Natural killer cell (primary cell): ENCODE measurements at regions of chr9 and their contacts with region 1.

Region 1: DNA sequence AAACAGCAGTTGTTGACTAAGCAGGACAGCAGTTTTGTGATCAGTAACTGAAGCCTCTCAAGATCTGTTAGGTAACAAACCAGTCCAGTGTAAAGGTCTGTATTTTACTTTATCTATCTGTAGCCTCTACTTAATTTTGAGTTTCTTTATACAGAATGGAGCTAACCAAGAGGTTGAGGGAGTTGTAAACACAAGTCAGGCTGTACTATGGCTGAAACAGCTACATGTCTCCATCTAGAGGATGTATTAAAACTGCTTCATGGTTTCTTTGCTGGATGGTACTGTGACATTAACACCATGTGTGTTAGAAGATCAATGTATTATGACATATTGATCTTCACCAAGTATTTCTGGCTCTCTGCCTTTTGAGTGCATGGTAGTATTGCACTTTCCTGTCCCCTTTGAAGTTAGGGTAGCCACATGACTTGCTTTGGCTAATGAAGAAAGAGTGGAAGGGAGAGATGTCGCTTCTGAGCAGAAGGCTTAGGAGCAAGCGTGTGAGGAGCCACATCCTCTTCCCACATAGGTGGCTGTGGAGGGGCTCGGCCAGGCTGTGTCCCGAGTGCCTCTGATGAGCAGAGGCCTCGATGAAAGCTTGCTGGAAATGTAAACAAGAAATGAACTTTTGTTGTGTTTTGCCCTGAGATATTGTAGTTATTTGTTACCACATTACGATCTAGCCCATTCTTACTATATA is 105.6 kb upstream of the PCA3 start:
- DNase-seq: peak in 1 of 2 donors; percentile 69
- ATAC-seq: peak; percentile 70 to 82 (median 75)
- H3K4me3 ChIP-seq: no peak overlapping the region
- H3K4me3 Mint-ChIP-seq: no peak overlapping the region
- H3K27ac ChIP-seq: no peak overlapping the region
- H3K27ac Mint-ChIP-seq: peak overlapping the region; percentile 5 to 85
- H3K4me1 ChIP-seq: peaks cover 9% of the 10 kb centered on the region
- H3K4me1 Mint-ChIP-seq: peaks cover 56 to 63% of the 10 kb centered on the region in 2 donors
- H3K27me3 ChIP-seq: no peaks in the 10 kb centered on the region
- H3K27me3 Mint-ChIP-seq: no peaks in the 10 kb centered on the region
- CTCF ChIP-seq: peak; percentile 70

Region 2: DNA sequence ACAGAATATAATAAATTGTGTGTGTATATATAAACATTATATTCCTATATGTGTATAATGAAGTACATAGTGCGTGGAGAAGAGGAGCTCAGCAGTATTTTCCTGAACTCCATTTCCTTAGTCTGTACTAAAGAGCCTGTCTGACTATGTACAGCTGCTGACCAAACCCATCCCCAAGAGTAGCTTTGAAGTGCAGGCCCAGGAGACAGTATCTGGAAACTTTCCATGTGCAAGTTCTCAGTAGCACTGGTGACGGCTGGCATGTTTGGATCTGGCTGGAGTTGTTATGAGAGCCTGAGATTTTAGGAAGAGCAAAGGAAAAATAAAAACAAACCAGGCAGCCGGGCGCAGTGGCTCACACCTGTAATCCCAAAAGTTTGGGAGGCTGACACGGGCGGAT is 508.7 kb before region 1 on chr9:
- intact Hi-C with region 1: no loop called
- DNase-seq: no peak
- ATAC-seq: no peak
- H3K4me3 ChIP-seq: no peak overlapping the region
- H3K4me3 Mint-ChIP-seq: no peak overlapping the region
- H3K27ac ChIP-seq: no peak overlapping the region
- H3K27ac Mint-ChIP-seq: no peak overlapping the region
- H3K4me1 ChIP-seq: no peaks in the 10 kb centered on the region
- H3K4me1 Mint-ChIP-seq: no peaks in the 10 kb centered on the region
- H3K27me3 ChIP-seq: no peaks in the 10 kb centered on the region
- H3K27me3 Mint-ChIP-seq: peaks cover 0 to 6% of the 10 kb centered on the region in 2 donors
- CTCF ChIP-seq: no peak

Region 3: DNA sequence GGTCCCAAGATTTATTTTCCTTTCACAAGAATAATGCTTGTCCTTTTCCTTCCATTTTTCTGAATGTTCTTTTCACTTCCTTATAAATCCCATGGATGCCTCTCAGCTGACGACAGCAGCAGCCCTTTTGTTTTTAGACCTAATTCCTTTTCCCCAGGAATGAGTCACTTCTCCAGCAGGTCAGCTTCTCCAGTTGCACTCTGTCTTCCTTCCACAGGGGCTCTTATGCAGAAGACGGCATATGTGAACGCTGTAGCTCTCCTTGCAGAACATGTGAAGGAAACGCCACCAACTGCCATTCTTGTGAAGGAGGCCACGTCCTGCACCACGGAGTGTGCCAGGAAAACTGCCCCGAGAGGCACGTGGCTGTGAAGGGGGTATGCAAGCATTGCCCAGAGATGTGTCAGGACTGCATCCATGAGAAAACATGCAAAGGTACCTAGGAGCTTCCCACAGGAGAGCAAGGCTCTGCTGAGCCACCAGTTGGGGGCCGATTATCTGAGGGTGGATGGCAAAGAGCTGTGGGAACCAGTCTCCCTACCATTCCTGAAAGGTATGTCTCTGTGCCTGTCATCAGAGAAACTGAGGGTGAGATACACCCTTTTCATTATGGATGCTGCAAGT is 337.4 kb before region 1 on chr9:
- intact Hi-C with region 1: no loop called
- DNase-seq: no peak
- ATAC-seq: no peak
- H3K4me3 ChIP-seq: no peak overlapping the region
- H3K4me3 Mint-ChIP-seq: no peak overlapping the region
- H3K27ac ChIP-seq: no peak overlapping the region
- H3K27ac Mint-ChIP-seq: no peak overlapping the region
- H3K4me1 ChIP-seq: no peaks in the 10 kb centered on the region
- H3K4me1 Mint-ChIP-seq: no peaks in the 10 kb centered on the region
- H3K27me3 ChIP-seq: no peaks in the 10 kb centered on the region
- H3K27me3 Mint-ChIP-seq: peaks cover 6 to 20% of the 10 kb centered on the region in 2 donors
- CTCF ChIP-seq: no peak

Region 4: DNA sequence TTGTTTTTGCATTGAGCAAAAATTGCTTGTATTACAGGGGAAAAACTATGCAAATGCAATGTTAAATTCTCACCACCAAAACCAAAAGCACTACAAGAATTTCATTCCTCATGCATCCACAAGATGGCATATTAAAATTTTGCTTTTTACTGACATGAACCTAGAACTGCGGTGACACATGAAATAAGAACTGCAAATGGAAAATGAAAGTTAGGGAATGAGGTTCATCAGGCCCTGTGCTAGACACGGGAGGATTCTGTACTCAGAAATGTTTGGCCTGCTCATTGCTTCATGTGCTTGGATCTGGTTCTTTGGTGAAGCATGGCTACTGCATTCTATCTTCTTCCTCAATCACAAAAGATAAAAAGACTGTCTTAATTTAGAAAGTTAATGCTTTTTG is 255.3 kb before region 1 on chr9:
- intact Hi-C with region 1: loop called (anchors 1 kb)
- DNase-seq: peak in 1 of 2 donors; percentile 75
- ATAC-seq: peak; percentile 76 to 87 (median 80)
- H3K4me3 ChIP-seq: no peak overlapping the region
- H3K4me3 Mint-ChIP-seq: peak overlapping the region; percentile 67
- H3K27ac ChIP-seq: no peak overlapping the region
- H3K27ac Mint-ChIP-seq: peak overlapping the region; percentile 53 to 61
- H3K4me1 ChIP-seq: no peaks in the 10 kb centered on the region
- H3K4me1 Mint-ChIP-seq: peaks cover 6 to 8% of the 10 kb centered on the region in 2 donors
- H3K27me3 ChIP-seq: no peaks in the 10 kb centered on the region
- H3K27me3 Mint-ChIP-seq: peaks cover 0 to 6% of the 10 kb centered on the region in 2 donors
- CTCF ChIP-seq: peak; percentile 52

Region 5: GRCh38 chr9:76451234-76451633 is 207.4 kb before region 1 on chr9:
- intact Hi-C with region 1: loop called (anchors 1 kb)
- DNase-seq: no peak
- ATAC-seq: no peak
- H3K4me3 ChIP-seq: no peak overlapping the region
- H3K4me3 Mint-ChIP-seq: no peak overlapping the region
- H3K27ac ChIP-seq: no peak overlapping the region
- H3K27ac Mint-ChIP-seq: no peak overlapping the region
- H3K4me1 ChIP-seq: peaks cover 6% of the 10 kb centered on the region
- H3K4me1 Mint-ChIP-seq: peaks cover 7% of the 10 kb centered on the region in 2 donors
- H3K27me3 ChIP-seq: no peaks in the 10 kb centered on the region
- H3K27me3 Mint-ChIP-seq: no peaks in the 10 kb centered on the region
- CTCF ChIP-seq: no peak

Region 6: DNA sequence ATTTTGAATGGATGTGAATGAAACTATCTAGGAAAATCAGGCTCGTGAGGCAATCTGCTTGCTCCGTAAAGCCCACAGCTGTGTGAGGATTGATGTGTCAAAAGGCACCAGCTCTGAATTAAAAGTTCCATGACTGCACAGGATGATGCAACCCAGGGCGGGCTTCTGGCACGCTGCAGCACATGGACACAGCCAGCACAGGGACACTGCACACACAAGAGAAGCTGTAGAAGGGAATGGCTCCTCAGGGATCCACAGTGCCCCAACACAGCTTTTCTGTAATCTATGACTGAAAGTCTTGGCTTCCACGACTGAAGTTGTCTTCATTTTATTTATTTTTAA is 48.7 kb before region 1 on chr9:
- intact Hi-C with region 1: loop called (anchors 5 kb)
- DNase-seq: no peak
- ATAC-seq: no peak
- H3K4me3 ChIP-seq: no peak overlapping the region
- H3K4me3 Mint-ChIP-seq: no peak overlapping the region
- H3K27ac ChIP-seq: no peak overlapping the region
- H3K27ac Mint-ChIP-seq: no peak overlapping the region
- H3K4me1 ChIP-seq: peaks cover 13% of the 10 kb centered on the region
- H3K4me1 Mint-ChIP-seq: peaks cover 25 to 36% of the 10 kb centered on the region in 2 donors
- H3K27me3 ChIP-seq: no peaks in the 10 kb centered on the region
- H3K27me3 Mint-ChIP-seq: no peaks in the 10 kb centered on the region
- CTCF ChIP-seq: no peak

Region 7: GRCh38 chr9:76962732-76963131 is 304.0 kb after region 1 on chr9:
- intact Hi-C with region 1: no loop called
- DNase-seq: no peak
- ATAC-seq: no peak
- H3K4me3 ChIP-seq: no peak overlapping the region
- H3K4me3 Mint-ChIP-seq: no peak overlapping the region
- H3K27ac ChIP-seq: no peak overlapping the region
- H3K27ac Mint-ChIP-seq: no peak overlapping the region
- H3K4me1 ChIP-seq: no peaks in the 10 kb centered on the region
- H3K4me1 Mint-ChIP-seq: no peaks in the 10 kb centered on the region
- H3K27me3 ChIP-seq: no peaks in the 10 kb centered on the region
- H3K27me3 Mint-ChIP-seq: no peaks in the 10 kb centered on the region
- CTCF ChIP-seq: no peak